ENCODE measurements at regions of chr6 and their contacts with region 1.

Region 1: DNA sequence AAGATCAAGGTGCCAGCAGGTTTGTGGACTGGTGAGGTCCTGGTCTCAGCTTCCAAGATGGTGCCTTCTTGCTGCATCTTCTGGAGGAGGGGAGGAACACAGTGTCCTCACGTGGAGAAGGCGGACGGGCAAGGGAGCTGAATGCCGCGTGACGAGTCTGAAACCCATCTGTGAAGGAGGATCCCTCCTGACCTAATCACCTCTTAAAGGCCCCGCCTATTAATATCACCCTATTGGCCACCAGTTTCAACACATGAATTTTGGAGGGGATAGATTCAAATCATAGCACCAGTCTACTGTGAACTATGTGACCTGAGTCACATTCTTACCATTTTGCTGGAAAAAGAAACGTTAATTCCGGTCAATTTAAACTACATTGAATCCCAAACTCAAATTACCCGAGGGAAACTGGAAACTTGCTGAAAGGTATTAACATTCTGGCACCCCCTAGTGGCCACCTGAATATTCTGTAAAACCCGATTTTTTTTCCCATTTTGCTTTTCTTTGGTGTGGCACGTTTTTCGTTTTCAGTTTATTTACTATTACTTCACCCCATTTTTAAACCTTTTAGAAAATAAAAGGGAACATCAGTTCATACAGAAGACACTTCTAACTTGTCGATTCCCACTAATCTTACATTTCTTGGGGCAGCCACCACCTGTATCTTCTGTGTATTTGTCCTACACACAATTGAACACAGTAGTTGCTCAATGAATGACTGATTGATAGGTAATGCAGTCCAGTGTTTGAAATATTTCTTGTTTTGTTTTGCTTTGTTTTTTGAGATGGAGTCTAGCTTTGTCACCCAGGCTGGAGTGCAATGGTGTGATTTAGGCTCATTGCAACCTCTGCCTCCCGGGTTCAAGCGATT is 17.9 kb upstream of the CCDC170 start:
- DNase-seq: no peak
- ATAC-seq: peak; percentile 31
- H3K4me3 Mint-ChIP-seq: peak overlapping the region; percentile 44
- H3K27ac Mint-ChIP-seq: no peak overlapping the region
- H3K4me1 Mint-ChIP-seq: peaks cover 9% of the 10 kb centered on the region
- H3K27me3 Mint-ChIP-seq: no peaks in the 10 kb centered on the region
- CTCF ChIP-seq: peak; percentile 97

Region 2: DNA sequence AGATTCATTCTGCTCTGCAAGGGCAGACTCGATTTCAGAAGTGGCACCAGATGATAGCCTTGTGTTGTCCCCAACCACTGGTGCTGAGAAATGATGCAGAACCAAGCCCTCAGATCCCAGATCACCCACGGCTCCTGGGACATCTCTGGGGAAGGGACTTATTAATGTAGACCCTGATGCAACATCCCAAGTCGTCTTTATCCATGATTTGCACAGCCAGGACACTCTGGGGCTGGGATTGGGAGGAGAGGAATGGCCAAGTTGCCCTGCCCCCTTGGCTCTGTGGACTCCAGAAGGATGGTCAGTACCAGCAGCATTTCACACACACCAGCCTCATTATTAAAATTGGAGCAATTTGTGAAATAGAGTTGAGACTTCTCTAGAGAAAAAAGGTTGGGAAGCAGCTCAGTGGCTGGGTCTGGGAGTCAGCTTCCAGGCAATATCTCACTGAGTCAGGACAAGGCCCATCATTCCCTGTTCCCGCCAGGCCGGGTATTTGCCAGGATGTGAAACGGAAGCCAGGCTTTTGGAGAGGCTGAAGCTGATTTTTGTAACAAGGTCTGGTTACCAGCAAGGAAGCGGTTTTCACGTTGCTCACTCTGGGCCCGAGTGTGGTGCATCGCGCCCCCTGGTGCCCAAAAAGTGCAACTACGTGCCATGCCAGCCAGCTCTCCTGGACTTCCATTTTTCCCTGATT is 151.9 kb before region 1 on chr6:
- CTCF ChIA-PET with region 1: interaction called, 3 read pairs
- POLR2A ChIA-PET with region 1: no interaction called
- intact Hi-C with region 1: loop called (anchors 10 kb)
- DNase-seq: peak; percentile 61
- ATAC-seq: peak; percentile 84
- H3K4me3 Mint-ChIP-seq: peak overlapping the region; percentile 53
- H3K27ac Mint-ChIP-seq: no peak overlapping the region
- H3K4me1 Mint-ChIP-seq: peaks cover 23% of the 10 kb centered on the region
- H3K27me3 Mint-ChIP-seq: peaks cover 30% of the 10 kb centered on the region
- CTCF ChIP-seq: no peak

Region 3: GRCh38 chr6:151409260-151409659 is 66.6 kb before region 1 on chr6:
- CTCF ChIA-PET with region 1: interaction called, 4 read pairs
- POLR2A ChIA-PET with region 1: no interaction called
- intact Hi-C with region 1: loop called (anchors 1 kb)
- DNase-seq: no peak
- ATAC-seq: peak; percentile 72
- H3K4me3 Mint-ChIP-seq: peak overlapping the region; percentile 9
- H3K27ac Mint-ChIP-seq: peak overlapping the region; percentile 60
- H3K4me1 Mint-ChIP-seq: peaks cover 19% of the 10 kb centered on the region
- H3K27me3 Mint-ChIP-seq: no peaks in the 10 kb centered on the region
- CTCF ChIP-seq: no peak

Region 4: GRCh38 chr6:151440930-151441329 is 35.0 kb before region 1 on chr6:
- CTCF ChIA-PET with region 1: interaction called, 5 read pairs
- POLR2A ChIA-PET with region 1: no interaction called
- intact Hi-C with region 1: loop called (anchors 1 kb)
- DNase-seq: no peak
- ATAC-seq: no peak
- H3K4me3 Mint-ChIP-seq: no peak overlapping the region
- H3K27ac Mint-ChIP-seq: no peak overlapping the region
- H3K4me1 Mint-ChIP-seq: peaks cover 20% of the 10 kb centered on the region
- H3K27me3 Mint-ChIP-seq: no peaks in the 10 kb centered on the region
- CTCF ChIP-seq: no peak

Measured in activated B cell treated with CpG ODN at 0.5 μM for 24 hours (primary cell).